Posterior vena cava (tissue), 2 donors: ENCODE measurements at regions of chr6 and their contacts with region 1.

Region 1: DNA sequence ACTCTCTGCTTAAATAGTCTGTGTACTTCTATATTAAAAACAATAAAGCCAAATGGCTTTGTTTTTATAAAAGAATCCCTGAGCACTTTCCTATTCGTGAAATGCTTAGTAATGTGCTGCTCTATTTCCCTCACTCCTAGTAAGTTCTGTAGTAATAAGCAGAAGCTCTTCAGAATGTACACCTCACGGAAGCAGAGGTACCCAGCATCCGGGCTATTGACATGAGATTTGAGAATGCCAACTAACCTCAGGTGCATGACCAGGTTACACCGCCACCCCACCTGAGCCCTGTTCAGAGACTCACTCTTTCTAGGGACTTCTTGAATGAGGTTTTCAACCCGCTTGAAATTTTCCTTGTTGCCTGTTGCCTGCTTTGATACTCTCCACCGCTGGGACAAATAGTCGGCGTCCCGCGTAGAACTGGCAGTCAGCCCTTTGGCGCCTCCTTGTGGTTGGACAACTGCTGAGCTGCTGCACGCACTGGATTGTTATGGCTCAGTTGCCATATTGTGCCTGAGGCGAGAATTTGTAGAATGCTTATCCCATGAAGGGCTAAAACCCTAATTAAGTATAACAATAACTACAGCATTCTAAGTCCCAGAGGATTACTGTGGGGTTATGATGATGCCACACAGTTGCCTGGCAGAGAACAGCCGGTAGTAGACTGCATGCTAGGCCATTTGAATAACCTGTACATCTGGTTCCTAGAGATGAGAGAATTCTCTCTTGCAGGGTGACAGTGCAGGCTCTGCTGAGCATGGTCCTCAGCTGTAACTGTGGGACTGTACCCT is 95.4 kb downstream of the KHDC1L start:
- DNase-seq: peak; percentile 95

Region 2: GRCh38 chr6:71139249-71139648 is 1990.6 kb before region 1 on chr6:
- intact Hi-C with region 1: loop called in 1 of 2 experiments (anchors 10 kb)
- DNase-seq: no peak

Region 3: GRCh38 chr6:72411872-72412708 is 717.8 kb before region 1 on chr6:
- intact Hi-C with region 1: loop called in 1 of 2 experiments (anchors 10 kb)
- DNase-seq: peak; percentile 87

Region 4: DNA sequence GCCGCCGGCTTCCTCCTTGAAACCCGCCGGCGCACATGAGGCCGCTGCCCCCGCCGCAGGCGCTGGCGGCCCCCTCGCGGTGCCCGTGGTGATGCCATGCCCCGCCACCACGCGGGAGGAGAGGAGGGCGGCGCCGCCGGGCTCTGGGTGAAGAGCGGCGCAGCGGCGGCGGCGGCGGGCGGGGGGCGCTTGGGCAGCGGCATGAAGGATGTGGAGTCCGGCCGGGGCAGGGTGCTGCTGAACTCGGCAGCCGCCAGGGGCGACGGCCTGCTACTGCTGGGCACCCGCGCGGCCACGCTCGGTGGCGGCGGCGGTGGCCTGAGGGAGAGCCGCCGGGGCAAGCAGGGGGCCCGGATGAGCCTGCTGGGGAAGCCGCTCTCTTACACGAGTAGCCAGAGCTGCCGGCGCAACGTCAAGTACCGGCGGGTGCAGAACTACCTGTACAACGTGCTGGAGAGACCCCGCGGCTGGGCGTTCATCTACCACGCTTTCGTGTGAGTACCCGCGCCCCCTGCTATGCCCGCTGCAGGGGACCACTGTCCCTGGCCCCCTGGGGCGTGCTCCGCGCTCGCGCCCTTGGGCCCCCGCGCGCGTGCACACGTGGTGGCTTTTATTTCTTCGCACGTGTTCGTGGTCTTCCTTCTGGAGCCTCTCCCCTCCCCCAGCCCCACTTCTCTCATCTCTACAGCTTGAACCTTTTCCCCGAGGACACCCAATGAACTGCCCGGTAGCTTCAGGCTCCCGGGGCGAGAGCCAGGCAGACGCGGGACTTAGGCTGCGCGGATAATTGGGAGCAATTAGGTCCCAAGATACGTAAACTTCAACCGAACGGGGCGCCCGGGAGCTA is 507.5 kb before region 1 on chr6:
- intact Hi-C with region 1: loop called in 1 of 2 experiments (anchors 5 kb)
- DNase-seq: no peak

Region 5: GRCh38 chr6:74044417-74045096 is 914.7 kb after region 1 on chr6:
- intact Hi-C with region 1: no loop called
- DNase-seq: no peak

Region 6: DNA sequence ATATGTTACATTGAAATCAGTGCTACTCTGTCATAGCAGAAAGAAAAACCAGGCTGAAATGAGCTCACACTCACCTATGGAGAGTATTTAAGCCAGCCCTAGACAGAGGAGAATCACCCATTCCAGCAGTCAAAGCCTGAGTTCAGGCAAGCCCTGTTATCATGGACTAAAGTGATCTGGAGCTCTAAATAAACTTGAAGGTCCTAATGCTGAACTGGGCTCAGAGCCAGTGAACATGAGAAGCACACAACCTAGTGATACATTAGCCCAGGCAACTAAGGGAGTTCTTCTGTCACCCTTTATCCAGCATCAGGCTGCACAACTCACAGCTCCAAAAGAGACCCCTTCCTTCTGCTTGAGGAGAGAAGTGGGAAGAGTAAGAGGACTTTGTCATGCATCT is 1651.0 kb after region 1 on chr6:
- intact Hi-C with region 1: no loop called
- DNase-seq: no peak